Endothelial cell of umbilical vein (primary cell): ENCODE measurements at regions of chr2 and their contacts with region 1.

Region 1: DNA sequence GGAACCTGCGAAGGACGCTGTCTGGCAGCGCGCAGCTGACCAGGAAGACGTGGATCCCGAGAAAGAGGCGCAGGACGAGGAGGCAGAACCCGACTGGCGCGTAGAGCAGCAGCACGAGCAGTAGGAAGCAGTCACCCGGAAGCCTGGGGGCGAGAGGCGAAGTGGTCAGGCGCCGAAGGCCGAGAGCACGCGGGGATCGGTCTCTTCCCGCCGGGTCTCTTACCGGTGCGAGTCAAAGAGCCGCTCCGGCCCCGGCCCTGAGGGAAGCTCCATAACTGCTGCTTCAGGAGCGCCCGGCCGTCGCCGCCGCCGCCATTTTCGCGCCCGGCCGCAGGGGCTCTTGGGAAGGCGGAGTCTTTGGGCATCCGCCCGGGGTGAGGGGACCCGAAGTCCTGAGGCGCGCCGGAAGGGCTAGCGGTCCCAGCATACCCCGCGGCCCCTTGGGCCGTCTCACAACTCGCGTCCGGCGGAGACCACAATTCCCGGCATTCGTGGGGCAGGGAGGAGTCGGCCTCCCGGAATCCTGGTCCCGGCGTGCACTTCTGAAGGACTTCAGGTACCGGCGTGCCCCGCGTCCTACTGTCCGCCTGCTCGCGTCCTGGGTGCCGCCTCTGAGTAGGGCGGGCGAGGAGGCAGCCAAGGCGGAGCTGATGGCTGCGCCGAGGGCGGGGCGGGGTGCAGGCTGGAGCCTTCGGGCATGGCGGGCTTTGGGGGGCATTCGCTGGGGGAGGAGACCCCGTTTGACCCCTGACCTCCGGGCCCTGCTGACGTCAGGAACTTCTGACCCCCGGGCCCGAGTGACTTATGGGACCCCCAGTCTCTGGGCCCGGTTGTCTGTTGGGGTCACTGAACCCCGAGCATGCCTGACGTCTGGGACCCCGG is at the starts of genes AUP1 and HTRA2:
- DNase-seq: peak; percentile 97
- H3K4me3 ChIP-seq: peak within 1 kb of the TSS; percentile 77 to 90 (median 81)
- H3K27ac ChIP-seq: peak within 1 kb of the TSS; percentile 74
- H3K4me1 ChIP-seq: peaks cover 20% of the 10 kb centered on the region
- H3K27me3 ChIP-seq: no peaks in the 10 kb centered on the region
- CTCF ChIP-seq: no peak
- POLR2A ChIP-seq: peak; percentile 96
- total RNA-seq, gene AUP1: 103 and 109 TPM in 2 replicates
- total RNA-seq, gene HTRA2: 32.6 and 34.3 TPM in 2 replicates

Region 2: GRCh38 chr2:73736855-73737779 is 792.5 kb before region 1 on chr2 and contains the start of gene TPRKB:
- CTCF ChIA-PET with region 1: no interaction called
- POLR2A ChIA-PET with region 1: no interaction called
- dilution Hi-C with region 1: no loop called
- intact Hi-C with region 1: loop called (anchors 2 kb)
- DNase-seq: peak; percentile 95
- H3K4me3 ChIP-seq: peak within 1 kb of the TSS; percentile 75 to 98 (median 82)
- H3K27ac ChIP-seq: peak within 1 kb of the TSS; percentile 88
- H3K4me1 ChIP-seq: peaks cover 16% of the 10 kb centered on the region
- H3K27me3 ChIP-seq: no peaks in the 10 kb centered on the region
- CTCF ChIP-seq: no peak
- POLR2A ChIP-seq: peak; percentile 63
- total RNA-seq, gene TPRKB: 33.4 and 36.1 TPM in 2 replicates

Region 3: GRCh38 chr2:74334931-74335333 is 194.7 kb before region 1 on chr2:
- CTCF ChIA-PET with region 1: interaction called, 9 read pairs
- POLR2A ChIA-PET with region 1: no interaction called
- dilution Hi-C with region 1: no loop called
- intact Hi-C with region 1: loop called (anchors 5 kb)
- DNase-seq: peak; percentile 70
- H3K4me3 ChIP-seq: no peak overlapping the region
- H3K27ac ChIP-seq: no peak overlapping the region
- H3K4me1 ChIP-seq: no peaks in the 10 kb centered on the region
- H3K27me3 ChIP-seq: peaks cover 0 to 2% of the 10 kb centered on the region in 2 experiments
- CTCF ChIP-seq: peak; percentile 88 to 95
- POLR2A ChIP-seq: no peak

Region 4: DNA sequence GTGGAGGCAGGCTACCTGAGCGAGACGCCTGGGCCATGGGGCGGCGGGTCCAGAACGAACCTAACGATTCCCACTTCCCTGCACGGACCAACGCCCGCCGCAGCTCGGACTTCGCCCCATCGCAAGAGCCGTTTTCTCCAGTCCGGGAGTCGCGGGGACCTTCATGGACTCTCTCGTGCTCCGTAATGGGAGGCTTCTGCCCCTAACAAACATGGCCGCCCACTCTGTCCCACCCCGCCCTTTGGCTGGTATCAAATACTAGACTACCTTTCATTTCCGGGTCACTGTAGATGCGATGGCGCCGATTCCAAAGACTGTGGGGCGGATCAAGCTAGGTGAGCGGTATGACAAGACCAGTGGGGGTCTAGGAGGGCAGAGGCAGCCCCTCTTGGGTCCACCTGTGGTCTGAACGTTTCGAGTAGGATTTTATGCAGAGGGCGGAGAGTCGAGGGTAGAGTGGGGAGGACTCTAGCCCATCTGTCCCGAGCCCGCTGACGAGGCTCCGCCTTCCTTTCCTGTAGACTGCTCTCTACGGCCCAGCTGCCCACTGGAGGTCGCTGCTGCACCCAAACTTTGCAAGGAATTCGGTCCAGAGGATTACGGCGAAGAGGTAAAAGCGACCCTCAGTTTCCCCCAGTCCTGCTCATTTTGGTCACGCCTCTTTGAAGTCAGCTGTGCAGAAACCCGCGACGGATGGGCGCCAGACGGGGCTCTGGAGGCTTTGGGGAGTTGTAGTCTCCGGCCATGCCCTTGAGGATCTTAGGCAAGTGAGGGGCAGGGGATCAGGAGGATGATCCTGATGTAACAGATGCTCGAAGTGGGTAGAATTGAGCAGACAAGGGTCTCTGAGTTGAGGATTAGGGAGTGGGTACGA is 46.6 kb before region 1 on chr2 and contains the starts of genes CCDC142 and TTC31:
- CTCF ChIA-PET with region 1: interaction called, 82 read pairs
- POLR2A ChIA-PET with region 1: no interaction called
- dilution Hi-C with region 1: no loop called
- intact Hi-C with region 1: loop called (anchors 1 kb)
- DNase-seq: peak; percentile 97
- H3K4me3 ChIP-seq: peak within 1 kb of the TSS; percentile 6 to 79 (median 66)
- H3K27ac ChIP-seq: peak within 1 kb of the TSS; percentile 36
- H3K4me1 ChIP-seq: peaks cover 13% of the 10 kb centered on the region
- H3K27me3 ChIP-seq: no peaks in the 10 kb centered on the region
- CTCF ChIP-seq: peak; percentile 89 to 93
- POLR2A ChIP-seq: peak; percentile 55
- total RNA-seq, gene CCDC142: 20.3 and 23.8 TPM in 2 replicates
- total RNA-seq, gene TTC31: 20.1 and 21.8 TPM in 2 replicates

Region 5: DNA sequence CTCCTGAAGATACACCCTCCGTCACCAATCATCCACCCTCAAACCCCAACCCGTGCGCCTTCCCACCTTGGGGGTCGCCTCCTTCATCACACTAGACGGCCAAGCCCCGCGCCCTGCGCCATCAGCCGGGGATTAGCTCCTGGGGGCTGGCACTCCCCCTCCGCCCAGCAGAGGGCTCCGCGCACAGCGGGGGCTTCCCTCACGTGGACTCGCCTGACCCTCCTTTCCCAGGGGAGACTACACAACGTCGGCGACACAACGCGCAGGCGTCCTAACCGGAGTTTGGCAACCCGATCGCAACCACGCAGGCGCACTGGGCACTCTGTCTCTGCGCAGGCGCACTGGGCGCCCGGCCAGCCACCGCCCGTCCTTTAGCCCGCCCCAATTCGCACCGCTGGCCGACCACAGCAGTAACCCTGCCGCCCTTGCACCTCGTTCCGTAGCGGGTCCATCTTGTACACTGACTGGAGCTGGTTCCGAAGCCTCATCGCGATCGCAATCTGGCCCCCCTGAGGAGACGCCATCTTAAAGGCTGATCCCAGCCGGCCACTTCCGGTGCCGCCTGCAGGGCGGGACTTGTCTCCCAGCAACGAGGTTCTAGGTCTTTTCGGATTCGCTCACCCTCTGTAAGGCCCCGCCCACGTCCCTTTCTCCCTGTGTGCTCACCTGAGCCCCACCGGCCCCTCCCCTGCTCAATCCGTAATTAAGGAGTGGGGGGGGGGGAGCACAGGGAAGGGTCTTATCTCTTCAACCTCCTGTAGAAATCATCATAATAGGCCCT is 22.3 kb before region 1 on chr2 and contains the start of gene PCGF1:
- CTCF ChIA-PET with region 1: interaction called, 8 read pairs
- POLR2A ChIA-PET with region 1: interaction called, 4 read pairs
- dilution Hi-C with region 1: no loop called
- intact Hi-C with region 1: loop called (anchors 1 kb)
- DNase-seq: peak; percentile 98
- H3K4me3 ChIP-seq: peak within 1 kb of the TSS; percentile 3 to 75 (median 37)
- H3K27ac ChIP-seq: peak within 1 kb of the TSS; percentile 54
- H3K4me1 ChIP-seq: peaks cover 27% of the 10 kb centered on the region
- H3K27me3 ChIP-seq: peaks cover 31 to 40% of the 10 kb centered on the region in 2 experiments
- CTCF ChIP-seq: peak; percentile 41 to 81
- POLR2A ChIP-seq: peak; percentile 75
- total RNA-seq, gene PCGF1: 17.4 and 21.0 TPM in 2 replicates

Region 6: DNA sequence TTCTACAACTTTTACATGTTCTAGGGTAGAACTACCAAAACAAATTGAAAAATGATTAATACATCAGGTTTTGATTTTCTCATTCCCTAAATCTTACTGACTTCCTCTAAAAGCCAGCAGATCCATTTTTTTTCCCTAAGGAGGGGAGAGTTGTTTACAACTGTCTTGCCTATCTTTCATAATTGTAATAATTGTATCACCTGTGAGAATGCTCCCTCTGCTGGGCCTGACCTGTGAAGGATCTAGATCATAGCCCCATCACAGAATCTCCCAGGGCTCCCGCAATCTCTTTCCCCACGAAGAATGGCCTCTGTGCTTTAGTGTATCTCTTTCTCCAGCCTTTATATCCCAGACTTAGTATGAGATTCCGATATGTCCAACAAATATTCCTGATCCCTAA is 15.0 kb after region 1 on chr2:
- CTCF ChIA-PET with region 1: interaction called, 15 read pairs
- POLR2A ChIA-PET with region 1: no interaction called
- dilution Hi-C with region 1: no loop called
- intact Hi-C with region 1: loop called (anchors 1 kb)
- DNase-seq: no peak
- H3K4me3 ChIP-seq: no peak overlapping the region
- H3K27ac ChIP-seq: no peak overlapping the region
- H3K4me1 ChIP-seq: peaks cover 12% of the 10 kb centered on the region
- H3K27me3 ChIP-seq: peaks cover 15 to 26% of the 10 kb centered on the region in 2 experiments
- CTCF ChIP-seq: no peak
- POLR2A ChIP-seq: no peak

Region 7: DNA sequence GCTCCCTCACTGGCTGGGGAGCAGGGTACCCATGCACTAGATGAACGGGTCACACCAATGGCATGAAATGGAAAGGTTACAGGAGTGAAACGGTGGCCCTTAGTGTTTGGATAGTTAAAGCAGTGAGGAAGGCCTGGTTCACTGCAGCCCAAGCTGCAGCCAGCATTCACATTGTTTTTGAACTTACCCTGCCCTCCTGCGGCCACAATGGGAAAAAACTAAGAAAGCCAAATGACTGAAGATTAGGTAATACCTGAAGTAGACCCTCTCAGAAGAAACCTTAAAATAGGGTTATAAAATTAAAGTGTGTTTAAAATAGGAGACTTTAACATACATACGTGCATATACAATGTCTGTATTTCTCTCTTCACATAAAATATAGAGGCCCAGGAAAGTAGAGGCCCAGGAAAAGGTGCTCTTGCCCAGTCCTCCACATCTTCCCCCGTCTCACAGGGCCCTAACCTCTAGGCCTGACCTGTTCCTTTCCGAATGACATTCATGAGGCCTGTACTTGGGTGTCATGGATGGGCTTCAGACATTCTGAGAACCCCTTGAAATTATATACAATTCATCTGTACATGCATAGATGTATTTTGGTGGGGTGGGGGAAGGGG is 58.2 kb after region 1 on chr2:
- CTCF ChIA-PET with region 1: interaction called, 23 read pairs
- POLR2A ChIA-PET with region 1: no interaction called
- dilution Hi-C with region 1: no loop called
- intact Hi-C with region 1: loop called (anchors 1 kb)
- DNase-seq: peak; percentile 73
- H3K4me3 ChIP-seq: no peak overlapping the region
- H3K27ac ChIP-seq: no peak overlapping the region
- H3K4me1 ChIP-seq: no peaks in the 10 kb centered on the region
- H3K27me3 ChIP-seq: peaks cover 21 to 38% of the 10 kb centered on the region in 2 experiments
- CTCF ChIP-seq: peak; percentile 51 to 54
- POLR2A ChIP-seq: no peak

Region 8: GRCh38 chr2:74639543-74639942 is 109.9 kb after region 1 on chr2:
- CTCF ChIA-PET with region 1: no interaction called
- POLR2A ChIA-PET with region 1: no interaction called
- dilution Hi-C with region 1: no loop called
- intact Hi-C with region 1: no loop called
- DNase-seq: no peak
- H3K4me3 ChIP-seq: no peak overlapping the region
- H3K27ac ChIP-seq: no peak overlapping the region
- H3K4me1 ChIP-seq: no peaks in the 10 kb centered on the region
- H3K27me3 ChIP-seq: peaks cover 5 to 18% of the 10 kb centered on the region in 2 experiments
- CTCF ChIP-seq: no peak
- POLR2A ChIP-seq: no peak